Calu3 (cell line): ENCODE measurements at regions of chr6 and their contacts with region 1.

Region 1: DNA sequence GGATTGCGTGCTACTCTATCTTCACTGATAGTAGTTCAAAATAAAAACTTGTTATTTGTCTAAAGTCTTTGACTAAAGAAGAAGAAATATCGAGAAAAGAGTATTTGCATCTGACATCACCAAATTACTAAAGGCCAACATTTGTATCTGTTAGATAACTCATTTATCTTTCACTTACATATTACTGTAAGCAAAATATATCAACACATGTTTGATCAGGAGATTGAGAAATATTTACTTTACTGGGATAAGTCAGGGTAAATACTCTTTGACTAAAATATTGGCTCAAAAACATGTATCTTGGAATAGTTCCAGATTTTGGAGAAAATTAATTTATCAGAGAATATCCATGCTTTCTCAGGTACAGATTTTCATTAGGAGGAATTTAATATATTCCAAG is 306.0 kb downstream of the TENT5A start:
- DNase-seq: no peak
- H3K4me3 Mint-ChIP-seq: no peak overlapping the region
- H3K27ac Mint-ChIP-seq: no peak overlapping the region
- H3K4me1 Mint-ChIP-seq: peaks cover 15% of the 10 kb centered on the region
- H3K27me3 Mint-ChIP-seq: no peaks in the 10 kb centered on the region
- CTCF ChIP-seq: no peak

Region 2: GRCh38 chr6:81465859-81466258 is 19.4 kb after region 1 on chr6:
- CTCF ChIA-PET with region 1: no interaction called
- intact Hi-C with region 1: no loop called
- DNase-seq: peak; percentile 26
- H3K4me3 Mint-ChIP-seq: no peak overlapping the region
- H3K27ac Mint-ChIP-seq: no peak overlapping the region
- H3K4me1 Mint-ChIP-seq: no peaks in the 10 kb centered on the region
- H3K27me3 Mint-ChIP-seq: no peaks in the 10 kb centered on the region
- CTCF ChIP-seq: peak; percentile 61

Region 3: DNA sequence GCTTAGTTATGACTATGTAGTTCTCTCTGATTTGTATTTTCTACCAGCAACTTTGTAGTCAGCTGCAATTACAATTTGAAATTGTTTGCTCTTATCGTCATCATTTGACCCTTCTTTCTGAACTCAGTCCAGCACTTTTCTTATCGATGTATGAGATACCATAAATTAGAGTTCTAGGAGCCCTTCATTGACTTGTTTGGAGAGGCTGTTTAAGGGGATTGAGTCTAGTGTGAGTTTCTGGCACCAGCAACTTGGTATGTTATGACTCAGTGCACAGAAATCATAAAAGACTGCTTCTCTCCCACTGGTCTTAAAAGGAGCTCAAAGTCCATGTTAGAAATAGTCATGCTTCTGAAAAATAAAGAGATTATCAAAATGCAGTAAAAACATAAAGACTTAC is 115.7 kb after region 1 on chr6:
- CTCF ChIA-PET with region 1: no interaction called
- intact Hi-C with region 1: loop called (anchors 5 kb)
- DNase-seq: peak; percentile 16
- H3K4me3 Mint-ChIP-seq: peak overlapping the region; percentile 47
- H3K27ac Mint-ChIP-seq: peak overlapping the region; percentile 66
- H3K4me1 Mint-ChIP-seq: peaks cover 16% of the 10 kb centered on the region
- H3K27me3 Mint-ChIP-seq: no peaks in the 10 kb centered on the region
- CTCF ChIP-seq: no peak